ENCODE measurements at regions of chr12 and their contacts with region 1.

Region 1: GRCh38 chr12:49623142-49623904 is at the start of gene PRPF40B:
- DNase-seq: peak; percentile 92
- ATAC-seq: peak; percentile 85
- H3K4me3 ChIP-seq: peak within 1 kb of the TSS; percentile 56 to 85 (median 73)
- H3K4me3 Mint-ChIP-seq: peak within 1 kb of the TSS; percentile 94
- H3K27ac ChIP-seq: peak within 1 kb of the TSS; percentile 56 to 65
- H3K27ac Mint-ChIP-seq: peak within 1 kb of the TSS; percentile 91
- H3K4me1 ChIP-seq: peaks cover 11 to 21% of the 10 kb centered on the region in 2 donors
- H3K4me1 Mint-ChIP-seq: peaks cover 19% of the 10 kb centered on the region
- H3K27me3 ChIP-seq: no peaks in the 10 kb centered on the region
- H3K27me3 Mint-ChIP-seq: no peaks in the 10 kb centered on the region
- CTCF ChIP-seq: peak; percentile 51
- total RNA-seq, gene PRPF40B: 23.6 and 23.7 TPM in 2 replicates

Region 2: DNA sequence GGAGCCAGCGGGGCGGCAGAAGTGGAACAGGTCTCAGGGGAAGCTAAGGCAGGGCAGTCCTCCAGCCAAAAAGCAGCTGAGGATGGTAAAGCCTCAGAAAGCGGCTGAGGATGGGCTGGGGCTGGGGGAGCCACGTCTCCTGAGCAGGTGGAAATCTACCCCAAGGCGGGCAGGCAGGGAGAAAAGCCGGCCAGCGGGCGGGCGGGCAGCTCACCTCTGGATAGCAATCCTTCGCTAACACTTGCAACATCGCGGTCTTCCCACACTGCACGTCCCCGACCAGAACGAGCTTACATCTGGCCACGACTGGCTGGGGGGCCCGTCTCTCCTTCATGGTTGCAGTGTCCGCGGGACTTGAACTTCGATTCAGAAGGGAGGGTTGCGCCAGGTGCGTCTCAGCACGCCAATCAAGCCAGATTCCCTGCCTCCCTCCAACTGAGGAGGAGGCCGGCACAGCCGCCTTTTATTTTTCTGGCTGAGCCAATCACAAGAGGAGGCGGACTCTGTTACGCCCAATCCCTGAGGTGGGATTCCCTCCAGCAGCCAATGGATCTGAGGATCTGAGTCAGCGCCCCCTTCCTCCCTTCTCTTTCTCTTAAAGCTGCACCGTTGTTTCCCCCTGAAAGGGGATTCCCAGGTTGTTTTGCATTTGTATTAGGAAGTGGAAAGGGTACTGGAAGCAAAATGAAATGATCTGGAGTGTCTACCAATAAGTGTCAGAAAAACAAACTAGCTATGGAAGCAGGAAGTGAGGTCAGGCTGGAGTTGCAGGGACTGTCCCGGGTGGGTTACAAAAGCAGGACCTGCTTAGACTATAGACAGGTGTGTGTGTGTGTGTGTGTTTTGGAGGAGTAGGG is 757.7 kb before region 1 on chr12 and contains the start of gene RND1:
- CTCF ChIA-PET with region 1: no interaction called
- POLR2A ChIA-PET with region 1: no interaction called
- intact Hi-C with region 1: loop called (anchors 5 kb)
- DNase-seq: peak; percentile 93
- ATAC-seq: peak; percentile 91
- H3K4me3 ChIP-seq: peak within 1 kb of the TSS; percentile 39 to 73 (median 70)
- H3K4me3 Mint-ChIP-seq: peak within 1 kb of the TSS; percentile 93
- H3K27ac ChIP-seq: peak within 1 kb of the TSS; percentile 48 to 63
- H3K27ac Mint-ChIP-seq: peak within 1 kb of the TSS; percentile 74
- H3K4me1 ChIP-seq: peaks cover 21 to 24% of the 10 kb centered on the region in 2 donors
- H3K4me1 Mint-ChIP-seq: peaks cover 28% of the 10 kb centered on the region
- H3K27me3 ChIP-seq: peaks cover 0 to 9% (median 1%) of the 10 kb centered on the region in 4 experiments
- H3K27me3 Mint-ChIP-seq: no peaks in the 10 kb centered on the region
- CTCF ChIP-seq: no peak
- total RNA-seq, gene RND1: 18.7 and 19.5 TPM in 2 replicates

Region 3: GRCh38 chr12:49366652-49367380 is 256.5 kb before region 1 on chr12:
- CTCF ChIA-PET with region 1: interaction called, 4 read pairs
- POLR2A ChIA-PET with region 1: no interaction called
- intact Hi-C with region 1: loop called (anchors 2 kb)
- DNase-seq: peak; percentile 90
- ATAC-seq: peak; percentile 78
- H3K4me3 ChIP-seq: peak overlapping the region; percentile 61 to 96 (median 80)
- H3K4me3 Mint-ChIP-seq: peak overlapping the region; percentile 87
- H3K27ac ChIP-seq: peak overlapping the region; percentile 90 to 91
- H3K27ac Mint-ChIP-seq: peak overlapping the region; percentile 98
- H3K4me1 ChIP-seq: peaks cover 33 to 39% of the 10 kb centered on the region in 2 donors
- H3K4me1 Mint-ChIP-seq: peaks cover 46% of the 10 kb centered on the region
- H3K27me3 ChIP-seq: no peaks in the 10 kb centered on the region
- H3K27me3 Mint-ChIP-seq: no peaks in the 10 kb centered on the region
- CTCF ChIP-seq: peak; percentile 44

Region 4: GRCh38 chr12:49567611-49568441 is 55.5 kb before region 1 on chr12 and contains the start of gene MCRS1:
- CTCF ChIA-PET with region 1: interaction called, 5 read pairs
- POLR2A ChIA-PET with region 1: interaction called, 4 read pairs
- intact Hi-C with region 1: loop called (anchors 1 kb)
- DNase-seq: peak; percentile 96
- ATAC-seq: peak; percentile 92
- H3K4me3 ChIP-seq: peak within 1 kb of the TSS; percentile 62 to 98 (median 91)
- H3K4me3 Mint-ChIP-seq: peak within 1 kb of the TSS; percentile 99
- H3K27ac ChIP-seq: peak within 1 kb of the TSS; percentile 91 to 97
- H3K27ac Mint-ChIP-seq: peak within 1 kb of the TSS; percentile 99
- H3K4me1 ChIP-seq: peaks cover 15 to 29% of the 10 kb centered on the region in 2 donors
- H3K4me1 Mint-ChIP-seq: peaks cover 28% of the 10 kb centered on the region
- H3K27me3 ChIP-seq: no peaks in the 10 kb centered on the region
- H3K27me3 Mint-ChIP-seq: no peaks in the 10 kb centered on the region
- CTCF ChIP-seq: no peak
- total RNA-seq, gene MCRS1: 81.1 and 84.3 TPM in 2 replicates

Region 5: GRCh38 chr12:49580572-49581535 is 42.5 kb before region 1 on chr12:
- CTCF ChIA-PET with region 1: interaction called, 4 read pairs
- POLR2A ChIA-PET with region 1: no interaction called
- intact Hi-C with region 1: loop called (anchors 1 kb)
- DNase-seq: peak; percentile 60
- ATAC-seq: peak; percentile 61
- H3K4me3 ChIP-seq: no peak overlapping the region
- H3K4me3 Mint-ChIP-seq: no peak overlapping the region
- H3K27ac ChIP-seq: no peak overlapping the region
- H3K27ac Mint-ChIP-seq: no peak overlapping the region
- H3K4me1 ChIP-seq: no peaks in the 10 kb centered on the region
- H3K4me1 Mint-ChIP-seq: peaks cover 5% of the 10 kb centered on the region
- H3K27me3 ChIP-seq: no peaks in the 10 kb centered on the region
- H3K27me3 Mint-ChIP-seq: no peaks in the 10 kb centered on the region
- CTCF ChIP-seq: peak; percentile 70

Region 6: GRCh38 chr12:49636979-49637755 is 13.8 kb after region 1 on chr12:
- CTCF ChIA-PET with region 1: interaction called, 61 read pairs
- POLR2A ChIA-PET with region 1: interaction called, 8 read pairs
- intact Hi-C with region 1: no loop called
- DNase-seq: peak; percentile 67
- ATAC-seq: peak; percentile 92
- H3K4me3 ChIP-seq: no peak overlapping the region
- H3K4me3 Mint-ChIP-seq: no peak overlapping the region
- H3K27ac ChIP-seq: no peak overlapping the region
- H3K27ac Mint-ChIP-seq: peak overlapping the region; percentile 67
- H3K4me1 ChIP-seq: peaks cover 13 to 18% of the 10 kb centered on the region in 2 donors
- H3K4me1 Mint-ChIP-seq: peaks cover 21% of the 10 kb centered on the region
- H3K27me3 ChIP-seq: no peaks in the 10 kb centered on the region
- H3K27me3 Mint-ChIP-seq: no peaks in the 10 kb centered on the region
- CTCF ChIP-seq: peak; percentile 77

Region 7: DNA sequence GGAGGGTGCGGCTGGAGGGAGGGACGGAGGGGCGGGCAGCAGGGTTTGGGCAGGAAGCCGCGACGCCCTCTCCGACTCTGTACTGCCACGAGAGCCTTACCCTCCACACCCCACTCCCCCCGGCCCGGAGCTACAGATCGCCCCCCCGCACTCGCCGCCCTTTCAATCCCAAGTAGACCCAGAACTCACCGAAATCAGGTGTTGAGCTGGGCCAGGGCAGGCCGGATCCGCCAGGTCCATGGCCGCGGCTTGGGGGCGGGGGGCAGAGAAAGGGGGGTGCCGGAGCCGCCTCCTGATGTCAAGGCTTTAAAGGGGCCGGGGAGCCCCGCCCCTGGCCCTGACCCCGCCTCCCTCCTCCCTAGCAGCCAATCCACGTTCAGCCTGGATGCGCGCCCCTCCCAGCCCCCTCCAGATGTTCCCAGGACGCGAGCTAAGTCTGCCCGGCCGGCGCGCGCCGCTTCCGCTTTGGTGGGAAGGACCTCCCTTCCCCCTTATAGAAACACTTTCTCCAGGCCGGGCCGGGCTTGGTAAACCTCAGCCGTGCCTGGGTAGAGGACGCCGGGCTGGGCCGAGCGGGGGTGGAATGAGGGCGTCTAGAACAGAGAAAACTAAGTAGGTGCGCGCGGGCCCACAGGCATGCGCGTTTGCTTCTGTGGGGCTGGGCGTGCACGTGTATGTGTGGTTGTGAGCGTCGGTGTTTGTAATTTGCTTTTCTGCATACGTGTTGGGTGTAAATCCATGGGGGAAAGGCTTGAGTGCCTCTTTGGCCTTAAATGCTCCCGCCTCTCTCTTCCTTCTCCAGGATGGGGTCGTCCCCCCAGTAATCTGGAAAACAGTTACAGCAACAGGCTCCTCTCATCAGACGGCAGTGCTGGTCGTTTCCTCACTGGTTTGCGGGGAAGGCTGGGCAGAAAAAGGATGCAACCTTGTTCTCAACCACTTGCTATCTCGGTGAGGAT is 205.1 kb after region 1 on chr12 and contains the start of gene NCKAP5L:
- CTCF ChIA-PET with region 1: no interaction called
- POLR2A ChIA-PET with region 1: interaction called, 4 read pairs
- intact Hi-C with region 1: loop called (anchors 2 kb)
- DNase-seq: peak; percentile 96
- ATAC-seq: peak; percentile 98
- H3K4me3 ChIP-seq: peak within 1 kb of the TSS; percentile 60 to 84 (median 73)
- H3K4me3 Mint-ChIP-seq: peak within 1 kb of the TSS; percentile 99
- H3K27ac ChIP-seq: peak within 1 kb of the TSS; percentile 36 to 75
- H3K27ac Mint-ChIP-seq: peak within 1 kb of the TSS; percentile 97
- H3K4me1 ChIP-seq: peaks cover 26% of the 10 kb centered on the region in 2 donors
- H3K4me1 Mint-ChIP-seq: peaks cover 39% of the 10 kb centered on the region
- H3K27me3 ChIP-seq: no peaks in the 10 kb centered on the region
- H3K27me3 Mint-ChIP-seq: no peaks in the 10 kb centered on the region
- CTCF ChIP-seq: no peak
- total RNA-seq, gene NCKAP5L: 13.2 and 13.4 TPM in 2 replicates

Region 8: DNA sequence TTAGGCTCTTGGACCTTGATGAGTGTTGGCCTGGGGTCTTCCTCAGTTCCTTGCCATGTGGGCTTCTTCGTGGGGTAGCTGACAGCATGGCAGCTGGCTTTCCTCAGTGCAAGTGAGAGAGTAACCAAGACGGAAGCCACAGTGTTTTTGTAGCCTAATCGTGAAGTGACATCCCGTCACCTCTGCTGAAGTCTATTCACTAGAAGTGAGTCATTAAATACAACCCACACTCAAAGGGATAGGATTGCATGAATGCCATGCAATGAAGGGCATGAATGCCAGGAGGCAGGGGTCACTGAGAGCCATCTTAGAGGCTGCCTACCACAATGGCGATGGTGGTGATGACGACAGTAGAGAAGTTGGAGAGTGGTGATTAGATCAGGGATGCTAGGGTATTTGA is 420.5 kb after region 1 on chr12:
- CTCF ChIA-PET with region 1: no interaction called
- POLR2A ChIA-PET with region 1: no interaction called
- intact Hi-C with region 1: no loop called
- DNase-seq: no peak
- ATAC-seq: no peak
- H3K4me3 ChIP-seq: no peak overlapping the region
- H3K4me3 Mint-ChIP-seq: no peak overlapping the region
- H3K27ac ChIP-seq: no peak overlapping the region
- H3K27ac Mint-ChIP-seq: no peak overlapping the region
- H3K4me1 ChIP-seq: no peaks in the 10 kb centered on the region
- H3K4me1 Mint-ChIP-seq: no peaks in the 10 kb centered on the region
- H3K27me3 ChIP-seq: peaks cover 0 to 5% (median 0%) of the 10 kb centered on the region in 4 experiments
- H3K27me3 Mint-ChIP-seq: no peaks in the 10 kb centered on the region
- CTCF ChIP-seq: no peak

Region 9: DNA sequence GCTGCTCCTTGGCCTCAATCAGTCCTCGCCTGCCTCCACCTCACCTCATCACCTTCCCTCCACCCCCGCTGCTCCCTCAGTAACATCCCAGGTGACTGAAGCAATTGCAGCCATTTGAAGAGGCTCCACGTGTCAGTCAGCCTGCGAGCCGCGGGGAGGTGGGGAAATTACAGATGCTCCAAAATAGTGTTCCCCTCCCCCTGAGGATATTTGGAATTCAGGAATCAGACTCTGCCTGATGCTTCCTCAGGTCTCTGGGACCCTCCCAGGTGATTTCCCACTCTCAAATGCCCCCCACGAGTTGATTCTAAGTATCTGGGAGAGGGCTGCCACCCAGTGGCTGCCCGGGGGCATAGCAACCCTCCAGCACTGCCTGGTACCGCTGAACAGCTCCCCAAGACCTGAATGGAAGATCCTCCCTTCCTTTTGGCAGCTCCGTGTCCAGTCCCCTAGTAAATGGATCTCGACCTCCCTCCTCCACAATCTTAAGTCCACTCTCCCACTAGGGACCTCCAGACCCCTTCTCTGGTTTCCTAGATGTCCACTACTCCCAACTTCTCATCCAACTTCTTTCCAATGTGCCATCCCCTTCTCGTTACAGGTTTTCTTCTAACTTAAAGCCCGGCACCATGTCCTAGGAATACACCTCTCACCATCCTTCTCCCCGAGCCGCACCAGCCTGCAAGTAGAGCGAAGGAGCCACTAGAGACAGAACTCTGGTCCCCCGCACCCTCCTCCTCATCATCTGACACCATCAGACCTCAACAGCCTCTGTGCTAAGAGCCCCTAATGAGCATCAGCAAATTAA is 432.7 kb after region 1 on chr12:
- CTCF ChIA-PET with region 1: no interaction called
- POLR2A ChIA-PET with region 1: no interaction called
- intact Hi-C with region 1: no loop called
- DNase-seq: peak; percentile 79
- ATAC-seq: peak; percentile 79
- H3K4me3 ChIP-seq: peak overlapping the region in 2 of 5 experiments; percentile 13 to 21
- H3K4me3 Mint-ChIP-seq: peak overlapping the region; percentile 92
- H3K27ac ChIP-seq: no peak overlapping the region
- H3K27ac Mint-ChIP-seq: peak overlapping the region; percentile 34
- H3K4me1 ChIP-seq: peaks cover 22 to 23% of the 10 kb centered on the region in 2 donors
- H3K4me1 Mint-ChIP-seq: peaks cover 21% of the 10 kb centered on the region
- H3K27me3 ChIP-seq: peaks cover 0 to 60% (median 27%) of the 10 kb centered on the region in 4 experiments
- H3K27me3 Mint-ChIP-seq: peaks cover 67% of the 10 kb centered on the region
- CTCF ChIP-seq: peak; percentile 97

Measured in B cell (primary cell).